ENCODE measurements at regions of chr17 and their contacts with region 1.

Region 1: DNA sequence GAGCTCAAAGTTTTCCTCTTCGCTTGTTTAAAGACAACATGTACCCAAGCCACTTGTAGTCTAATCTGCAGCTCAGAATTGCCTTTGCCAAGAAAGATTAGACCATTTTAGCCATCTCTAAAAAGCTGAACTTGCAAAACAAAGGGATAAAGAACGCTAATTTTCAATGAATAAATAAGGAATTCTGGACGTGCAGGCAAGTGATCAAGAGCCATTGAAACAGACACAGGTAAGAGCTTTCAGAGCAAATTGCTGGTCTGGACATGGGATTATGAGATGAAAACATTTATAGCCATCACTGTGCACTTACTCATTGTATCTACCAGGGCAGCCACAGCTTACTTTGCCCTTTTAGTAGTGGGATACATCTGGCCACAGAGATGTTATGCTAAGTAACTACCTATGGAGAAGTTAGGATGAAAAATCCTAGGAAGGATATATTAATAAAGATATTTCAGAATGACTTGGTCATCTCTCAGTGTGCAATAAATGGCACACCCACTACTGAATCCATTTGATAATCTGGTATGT is 44.4 kb downstream of the RND2 start:
- DNase-seq: no peak
- H3K4me3 Mint-ChIP-seq: no peak overlapping the region
- H3K27ac Mint-ChIP-seq: no peak overlapping the region
- H3K4me1 Mint-ChIP-seq: no peaks in the 10 kb centered on the region
- H3K27me3 Mint-ChIP-seq: no peaks in the 10 kb centered on the region

Region 2: GRCh38 chr17:43051969-43052368 is 17.5 kb before region 1 on chr17:
- CTCF ChIA-PET with region 1: no interaction called
- POLR2A ChIA-PET with region 1: no interaction called
- DNase-seq: no peak
- H3K4me3 Mint-ChIP-seq: no peak overlapping the region
- H3K27ac Mint-ChIP-seq: no peak overlapping the region
- H3K4me1 Mint-ChIP-seq: no peaks in the 10 kb centered on the region
- H3K27me3 Mint-ChIP-seq: no peaks in the 10 kb centered on the region

Region 3: DNA sequence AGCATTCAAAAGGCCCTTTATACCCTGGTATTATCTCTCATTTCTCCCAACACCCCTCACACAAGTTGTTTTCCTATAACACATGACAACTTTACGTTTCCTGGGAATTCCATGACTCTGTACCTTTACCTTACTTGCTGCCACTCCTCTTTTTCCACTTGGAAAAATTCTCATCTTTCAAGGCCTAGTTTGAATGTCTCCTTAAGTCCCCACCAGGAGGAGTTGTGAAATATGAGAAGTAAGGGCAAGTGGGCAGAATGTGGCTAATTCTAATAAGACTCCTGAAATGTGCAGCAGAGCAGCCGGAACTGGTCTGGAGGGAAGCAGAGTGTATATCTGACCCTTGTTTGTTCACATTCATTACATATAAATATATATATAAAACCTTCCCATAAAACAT is 16.0 kb after region 1 on chr17:
- CTCF ChIA-PET with region 1: interaction called, 3 read pairs
- POLR2A ChIA-PET with region 1: interaction called, 11 read pairs
- DNase-seq: no peak
- H3K4me3 Mint-ChIP-seq: no peak overlapping the region
- H3K27ac Mint-ChIP-seq: no peak overlapping the region
- H3K4me1 Mint-ChIP-seq: no peaks in the 10 kb centered on the region
- H3K27me3 Mint-ChIP-seq: no peaks in the 10 kb centered on the region

Region 4: DNA sequence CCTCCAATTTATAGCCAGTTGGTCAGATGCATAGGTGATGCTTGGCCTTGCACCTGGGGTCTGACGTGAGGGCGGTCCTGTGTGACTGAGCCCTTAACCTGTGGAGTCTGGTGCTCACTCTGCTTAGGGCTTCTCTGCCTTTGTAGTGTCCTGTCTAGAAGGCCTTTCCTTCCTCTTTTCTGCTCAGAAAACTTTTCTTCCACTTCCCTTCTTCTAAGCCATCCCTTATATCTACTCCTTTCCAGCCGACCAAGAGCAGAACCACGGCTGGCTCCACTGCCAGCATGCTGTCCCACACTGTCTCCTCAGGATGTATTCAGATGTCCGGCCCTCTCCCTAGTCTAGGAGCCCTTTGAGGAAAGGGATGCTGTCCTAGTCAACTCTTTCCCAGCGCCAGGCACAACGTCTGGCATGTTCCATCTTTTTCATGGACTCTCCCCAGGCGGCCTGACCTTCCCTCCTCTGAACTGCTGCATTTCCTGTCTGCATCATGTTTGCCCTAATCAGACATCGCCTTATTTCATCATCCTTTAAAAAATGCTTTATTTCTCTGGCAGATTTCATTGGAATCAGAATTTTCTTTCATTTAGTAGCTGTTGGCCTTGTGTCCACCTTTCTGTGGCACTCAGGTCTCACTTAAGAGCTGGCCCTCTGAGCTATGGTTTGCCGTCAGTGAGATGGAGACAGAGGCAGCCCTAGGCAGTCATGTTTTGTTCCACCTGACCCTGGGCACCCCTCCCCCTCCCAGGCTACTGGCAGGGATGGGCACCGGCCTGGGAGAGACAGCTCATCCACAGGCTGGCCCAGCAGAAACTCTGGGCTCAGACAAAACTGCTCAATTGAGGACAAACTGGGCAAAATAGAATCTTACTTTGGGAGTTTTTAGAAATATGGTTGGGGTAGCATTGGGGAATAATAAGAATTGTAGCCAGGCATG is 71.2 kb after region 1 on chr17:
- CTCF ChIA-PET with region 1: no interaction called
- POLR2A ChIA-PET with region 1: no interaction called
- DNase-seq: no peak
- H3K4me3 Mint-ChIP-seq: no peak overlapping the region
- H3K27ac Mint-ChIP-seq: no peak overlapping the region
- H3K4me1 Mint-ChIP-seq: peaks cover 10% of the 10 kb centered on the region
- H3K27me3 Mint-ChIP-seq: no peaks in the 10 kb centered on the region

Measured in activated CD4-positive, alpha-beta T cell treated with anti-CD3 and anti-CD28 coated beads, Interleukin-2, amount 10 ng/mL, durations not matched to agents 7 days and 5 days (primary cell).